Uterus (tissue), 4 donors: ENCODE measurements at regions of chr6 and their contacts with region 1.

Region 1: DNA sequence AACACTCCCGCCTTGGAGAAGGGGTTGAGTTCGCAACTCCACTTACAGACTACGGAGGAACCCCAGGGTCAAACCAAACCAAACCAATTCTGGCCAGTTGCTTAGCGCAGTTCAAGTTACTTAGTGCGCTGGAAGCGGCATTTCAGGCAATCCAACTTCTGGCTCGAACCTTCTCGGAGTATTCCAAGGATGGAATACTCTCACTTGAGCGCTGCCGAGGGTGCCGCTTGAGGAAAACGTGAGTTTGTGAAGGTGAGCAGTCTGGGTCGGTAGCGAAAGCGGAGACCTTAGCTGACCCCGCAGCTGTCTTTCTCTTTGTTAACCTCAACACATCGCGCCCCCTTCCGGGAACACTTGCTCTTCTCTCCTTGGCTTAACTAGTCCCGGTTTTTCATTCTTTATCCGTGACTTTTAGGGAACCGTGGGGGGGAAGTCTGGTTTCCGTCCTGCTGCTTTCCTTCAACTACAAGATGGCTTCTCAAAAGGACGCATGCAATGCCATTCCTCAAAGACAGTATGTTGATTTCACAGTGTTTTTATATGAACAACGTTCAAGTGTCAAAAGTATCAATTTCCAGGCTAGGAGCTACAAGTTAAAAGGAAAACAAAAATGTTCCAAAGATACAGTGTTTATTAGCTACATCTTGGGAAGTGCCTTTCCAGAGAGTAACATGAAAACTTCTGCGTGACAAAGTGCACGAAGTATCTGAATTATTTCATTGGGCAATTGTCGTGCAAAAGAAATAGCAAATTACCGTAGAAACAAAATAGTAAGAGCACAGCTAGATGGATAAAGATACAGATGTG is 742 bp upstream of the PNISR start:
- DNase-seq: peak; percentile 80 to 83
- H3K4me3 ChIP-seq: peak overlapping the region; percentile 74 to 91
- H3K27ac ChIP-seq: peak overlapping the region; percentile 95 to 100
- H3K4me1 ChIP-seq: peaks cover 14 to 20% of the 10 kb centered on the region in 2 donors
- H3K27me3 ChIP-seq: no peaks in the 10 kb centered on the region
- CTCF ChIP-seq: peak in 1 of 4 experiments; percentile 51
- POLR2A ChIP-seq: no peak

Region 2: DNA sequence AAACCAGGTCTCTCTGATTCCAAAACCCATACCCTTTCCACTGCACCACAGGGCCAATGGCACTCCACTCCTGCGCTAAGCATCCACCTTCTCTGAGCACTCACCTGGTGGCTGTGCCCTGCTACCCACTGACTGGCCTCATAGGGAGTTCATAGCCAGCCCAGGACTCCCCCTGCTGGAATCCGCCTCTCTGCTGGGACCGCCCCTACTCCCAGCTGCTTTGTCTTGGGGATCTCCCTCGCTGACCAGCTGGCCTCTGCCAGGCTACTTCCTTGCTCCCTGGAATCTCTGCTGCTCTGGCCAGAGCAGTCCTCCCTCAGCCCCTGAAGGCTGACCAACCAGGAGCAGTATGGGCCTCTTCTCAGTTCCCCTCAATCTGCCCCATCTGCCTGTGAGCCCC is 206.1 kb before region 1 on chr6:
- intact Hi-C with region 1: no loop called
- DNase-seq: no peak
- H3K4me3 ChIP-seq: no peak overlapping the region
- H3K27ac ChIP-seq: no peak overlapping the region
- H3K4me1 ChIP-seq: no peaks in the 10 kb centered on the region
- H3K27me3 ChIP-seq: no peaks in the 10 kb centered on the region
- CTCF ChIP-seq: no peak
- POLR2A ChIP-seq: no peak

Region 3: DNA sequence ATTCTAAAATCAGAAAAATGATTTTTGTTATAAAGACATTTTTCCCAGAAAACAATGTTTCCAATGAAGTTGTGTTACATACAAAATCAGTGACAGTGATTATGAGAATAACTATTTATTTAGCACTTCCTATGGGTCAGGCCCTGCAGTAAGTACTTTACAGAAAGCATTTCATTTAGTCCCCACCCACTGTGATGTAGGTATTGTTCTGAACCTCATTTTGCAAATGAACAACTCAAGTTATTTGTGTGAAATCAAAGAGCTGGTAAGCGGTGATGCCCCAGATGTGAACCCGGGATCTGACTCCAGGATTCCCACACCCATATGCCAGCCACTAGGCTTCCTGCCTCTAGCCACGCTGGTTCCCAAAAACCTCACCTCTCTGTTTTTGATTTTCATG is 107.3 kb before region 1 on chr6:
- intact Hi-C with region 1: no loop called
- DNase-seq: no peak
- H3K4me3 ChIP-seq: no peak overlapping the region
- H3K27ac ChIP-seq: no peak overlapping the region
- H3K4me1 ChIP-seq: no peaks in the 10 kb centered on the region
- H3K27me3 ChIP-seq: no peaks in the 10 kb centered on the region
- CTCF ChIP-seq: no peak
- POLR2A ChIP-seq: no peak

Region 4: DNA sequence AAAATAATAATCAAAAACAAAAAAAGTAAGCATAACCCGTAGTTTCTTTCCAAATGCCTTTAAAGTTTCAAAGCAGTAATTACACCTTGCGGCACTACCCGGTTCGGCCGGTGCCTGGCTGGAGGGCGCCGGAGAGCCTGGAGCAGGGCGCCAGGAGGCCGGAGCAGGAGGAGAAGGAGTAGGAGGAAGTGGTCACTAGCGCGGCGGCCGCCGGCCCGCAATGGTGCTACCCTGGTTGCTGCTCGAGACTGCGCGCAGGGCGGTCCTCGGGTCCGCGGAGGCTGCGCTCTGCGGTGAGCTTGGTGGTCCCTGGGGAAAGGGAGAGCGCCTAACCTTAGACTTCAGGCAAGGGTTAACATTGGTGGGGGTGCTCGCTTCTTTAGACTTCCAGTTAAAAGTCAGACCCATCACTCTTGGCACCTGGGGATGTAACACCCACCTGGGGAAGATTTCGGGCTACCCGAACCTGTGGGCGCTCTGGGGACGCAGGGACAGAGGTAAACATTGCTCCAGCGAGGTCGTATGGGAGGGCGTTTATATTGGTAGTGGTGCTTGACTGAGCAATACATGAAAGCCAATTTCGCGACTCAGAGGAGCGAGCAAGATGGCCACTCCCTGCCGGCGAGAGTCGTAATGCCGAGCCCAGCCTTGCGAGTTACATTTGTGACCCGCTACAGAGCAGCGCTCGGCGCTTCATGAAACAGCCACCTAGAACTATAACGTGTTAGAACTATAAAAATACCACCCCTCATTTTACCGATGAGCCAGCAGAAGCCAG is 95.2 kb after region 1 on chr6:
- intact Hi-C with region 1: loop called (anchors 10 kb)
- DNase-seq: peak; percentile 78 to 80
- H3K4me3 ChIP-seq: peak overlapping the region; percentile 80 to 89
- H3K27ac ChIP-seq: peak overlapping the region; percentile 89 to 93
- H3K4me1 ChIP-seq: peaks cover 0 to 7% of the 10 kb centered on the region in 2 donors
- H3K27me3 ChIP-seq: no peaks in the 10 kb centered on the region
- CTCF ChIP-seq: peak; percentile 84 to 98 (median 86)
- POLR2A ChIP-seq: peak; percentile 71 to 90

Region 5: GRCh38 chr6:99588618-99589289 is 162.9 kb after region 1 on chr6:
- intact Hi-C with region 1: no loop called
- DNase-seq: peak in 1 of 2 donors; percentile 46
- H3K4me3 ChIP-seq: peak overlapping the region; percentile 26 to 45
- H3K27ac ChIP-seq: no peak overlapping the region
- H3K4me1 ChIP-seq: peaks cover 0 to 8% of the 10 kb centered on the region in 2 donors
- H3K27me3 ChIP-seq: peaks cover 10 to 46% of the 10 kb centered on the region in 2 donors
- CTCF ChIP-seq: peak in 2 of 4 experiments; percentile 39 to 42
- POLR2A ChIP-seq: no peak